Dorsolateral prefrontal cortex (tissue), 120 donors: ENCODE measurements at regions of chr12 and their contacts with region 1.

Region 1: DNA sequence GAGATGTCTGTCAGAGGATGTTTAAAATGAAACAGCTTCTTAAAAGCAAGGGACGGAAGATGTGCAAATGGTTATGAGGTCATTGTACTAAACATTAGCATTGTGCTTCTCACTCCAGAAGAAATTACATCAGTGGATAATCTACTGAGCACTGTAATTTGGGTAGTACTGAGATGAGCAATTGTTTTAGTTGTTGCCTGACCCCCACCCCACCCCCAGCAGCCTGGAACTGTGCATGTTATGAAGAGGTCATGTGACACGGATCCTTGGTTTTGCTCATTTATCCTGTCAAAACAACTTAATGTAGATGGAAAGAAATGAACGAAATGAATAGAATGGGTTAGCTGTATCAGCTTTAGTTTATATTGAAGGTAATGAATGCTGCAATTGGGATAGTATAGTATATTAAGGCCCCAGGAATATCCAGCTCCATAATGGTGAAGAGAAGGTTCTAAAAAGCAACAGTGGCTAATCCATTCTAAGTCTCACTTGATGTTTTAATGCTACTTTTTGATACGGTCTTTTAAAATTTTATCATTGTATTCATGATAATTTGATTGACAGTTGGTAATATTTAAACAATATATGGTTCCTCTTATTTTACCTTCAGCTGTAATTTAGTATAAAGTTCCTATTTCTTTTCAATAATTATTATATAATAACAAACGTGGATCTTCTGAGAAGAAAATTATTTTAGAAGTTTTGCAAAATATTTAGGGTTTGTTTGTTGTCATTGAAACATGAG is 58.5 kb downstream of the WNK1 start:
- DNase-seq: peak in 1 of 10 donors; percentile 21
- H3K4me3 ChIP-seq: peak overlapping the region in 7 of 59 donors; percentile 4 to 35 (median 16)
- H3K27ac ChIP-seq: peak overlapping the region in 41 of 59 donors; percentile 0 to 74 (median 40)
- H3K27me3 ChIP-seq: no peaks in the 10 kb centered on the region
- CTCF ChIP-seq: no peak

Region 2: DNA sequence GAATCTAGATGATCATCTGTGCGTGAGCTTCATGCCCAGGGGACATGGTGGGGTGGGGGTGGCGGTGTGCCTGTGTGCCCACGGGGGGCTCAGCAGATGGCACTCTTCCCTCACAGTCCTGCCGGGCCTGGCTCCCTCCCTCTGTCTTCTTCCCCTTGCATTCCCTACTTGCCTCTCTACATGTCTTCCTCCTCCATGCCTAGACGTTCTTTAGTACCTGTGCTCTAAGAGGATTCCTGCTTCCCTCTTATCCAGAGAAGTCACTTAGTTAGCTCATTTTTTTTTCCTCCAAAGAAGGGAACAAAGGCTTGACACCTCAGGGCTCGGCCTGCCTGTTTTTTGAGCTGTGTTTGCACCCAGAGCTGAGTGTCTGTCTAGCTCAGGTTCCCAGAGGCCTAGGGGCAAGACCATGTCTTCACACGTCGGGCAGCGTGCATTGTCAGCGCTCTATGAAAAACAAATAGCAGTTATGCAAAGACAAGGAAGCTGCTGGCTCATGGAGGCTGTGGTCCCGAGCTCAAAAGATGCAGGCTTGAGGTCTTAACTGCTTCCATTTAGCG is 196.4 kb before region 1 on chr12:
- intact Hi-C with region 1: loop called in 1 of 2 experiments (anchors 10 kb)
- DNase-seq: peak in 7 of 10 donors; percentile 32 to 67 (median 56)
- H3K4me3 ChIP-seq: no peak overlapping the region
- H3K27ac ChIP-seq: peak overlapping the region in 39 of 59 donors; percentile 4 to 79 (median 52)
- H3K27me3 ChIP-seq: no peaks in the 10 kb centered on the region
- CTCF ChIP-seq: peak in 53 of 56 donors; percentile 22 to 77 (median 48)